ENCODE measurements at regions of chr11 and their contacts with region 1.

Region 1: DNA sequence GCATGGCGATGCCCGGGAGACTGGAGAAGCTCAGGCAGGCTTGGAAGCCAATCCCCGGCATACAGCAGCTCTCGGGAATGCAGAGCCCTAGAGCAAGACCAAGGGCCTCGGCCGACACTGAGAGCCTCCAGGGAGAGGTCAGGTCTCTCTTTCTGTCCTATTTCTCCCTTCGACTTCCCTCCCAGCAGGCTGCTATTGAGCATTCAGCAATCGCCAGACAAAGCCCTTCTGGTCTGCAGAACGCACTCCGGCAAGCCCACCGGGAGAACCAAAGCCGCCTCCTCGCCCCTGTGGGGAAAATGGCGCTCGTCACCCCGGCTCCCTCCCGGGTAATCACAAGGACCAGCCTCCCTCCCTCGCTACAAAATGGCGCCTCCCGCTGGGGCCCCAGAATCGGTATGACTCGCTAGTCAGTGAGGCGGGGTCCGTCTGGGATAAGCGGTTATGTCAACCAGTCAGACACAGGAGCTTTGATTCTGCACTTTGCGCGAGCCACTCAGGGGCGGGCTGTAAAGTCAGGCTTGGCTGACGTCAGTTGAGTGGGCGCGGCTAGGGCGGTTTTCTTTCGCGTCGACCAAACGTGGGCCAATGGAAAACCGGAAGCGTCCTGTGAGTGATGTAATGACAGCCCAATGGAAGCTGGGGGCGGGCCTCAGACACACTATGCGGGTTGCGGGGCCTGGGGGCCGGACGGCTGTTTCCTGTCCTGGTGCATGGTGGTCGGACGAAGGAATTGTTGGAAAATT is at the start of gene ZNF143:
- DNase-seq: peak; percentile 99 to 100 (median 100)
- H3K4me3 ChIP-seq: peak within 1 kb of the TSS; percentile 88 to 96
- H3K4me3 Mint-ChIP-seq: peak within 1 kb of the TSS; percentile 93 to 98 (median 97)
- H3K27ac ChIP-seq: peak within 1 kb of the TSS; percentile 97
- H3K27ac Mint-ChIP-seq: peak within 1 kb of the TSS; percentile 98 to 100 (median 99)
- H3K4me1 ChIP-seq: peaks cover 33% of the 10 kb centered on the region
- H3K4me1 Mint-ChIP-seq: peaks cover 16 to 43% (median 26%) of the 10 kb centered on the region in 4 donors
- H3K27me3 ChIP-seq: no peaks in the 10 kb centered on the region
- H3K27me3 Mint-ChIP-seq: no peaks in the 10 kb centered on the region
- total RNA-seq, gene ZNF143: 50.5 to 51.1 TPM

Region 2: GRCh38 chr11:8682303-8683114 is 778.0 kb before region 1 on chr11 and contains the starts of genes RPL27A and TRIM66:
- CTCF ChIA-PET with region 1: no interaction called
- POLR2A ChIA-PET with region 1: interaction called, 29 read pairs
- intact Hi-C with region 1: loop called (anchors 1 kb)
- DNase-seq: peak; percentile 98 to 99 (median 98)
- H3K4me3 ChIP-seq: peak within 1 kb of the TSS; percentile 61 to 87
- H3K4me3 Mint-ChIP-seq: peak within 1 kb of the TSS; percentile 89 to 99 (median 96)
- H3K27ac ChIP-seq: peak within 1 kb of the TSS; percentile 96
- H3K27ac Mint-ChIP-seq: peak within 1 kb of the TSS; percentile 97 to 99 (median 98)
- H3K4me1 ChIP-seq: peaks cover 34% of the 10 kb centered on the region
- H3K4me1 Mint-ChIP-seq: peaks cover 28 to 72% (median 40%) of the 10 kb centered on the region in 4 donors
- H3K27me3 ChIP-seq: no peaks in the 10 kb centered on the region
- H3K27me3 Mint-ChIP-seq: no peaks in the 10 kb centered on the region
- total RNA-seq, gene RPL27A: 1,456 to 1,504 TPM
- total RNA-seq, gene TRIM66: 25.0 to 31.3 TPM

Region 3: GRCh38 chr11:9265211-9266131 is 195.0 kb before region 1 on chr11 and contains the start of gene DENND5A:
- CTCF ChIA-PET with region 1: no interaction called
- POLR2A ChIA-PET with region 1: interaction called, 22 read pairs
- intact Hi-C with region 1: loop called (anchors 2 kb)
- DNase-seq: peak; percentile 32 to 51 (median 35)
- H3K4me3 ChIP-seq: peak within 1 kb of the TSS; percentile 68 to 76
- H3K4me3 Mint-ChIP-seq: peak within 1 kb of the TSS; percentile 90 to 99 (median 97)
- H3K27ac ChIP-seq: peak within 1 kb of the TSS; percentile 48
- H3K27ac Mint-ChIP-seq: peak within 1 kb of the TSS; percentile 92 to 97 (median 95)
- H3K4me1 ChIP-seq: peaks cover 33% of the 10 kb centered on the region
- H3K4me1 Mint-ChIP-seq: peaks cover 25 to 39% (median 31%) of the 10 kb centered on the region in 4 donors
- H3K27me3 ChIP-seq: no peaks in the 10 kb centered on the region
- H3K27me3 Mint-ChIP-seq: peaks cover 0 to 2% of the 10 kb centered on the region in 2 donors
- total RNA-seq, gene DENND5A: 58.6 to 61.9 TPM

Region 4: GRCh38 chr11:9363954-9364912 is 96.3 kb before region 1 on chr11:
- CTCF ChIA-PET with region 1: no interaction called
- POLR2A ChIA-PET with region 1: interaction called, 35 read pairs
- intact Hi-C with region 1: no loop called
- DNase-seq: peak; percentile 66 to 85 (median 78)
- H3K4me3 ChIP-seq: peak overlapping the region; percentile 62 to 96
- H3K4me3 Mint-ChIP-seq: peak overlapping the region; percentile 82 to 89 (median 88)
- H3K27ac ChIP-seq: peak overlapping the region; percentile 84
- H3K27ac Mint-ChIP-seq: peak overlapping the region; percentile 89 to 97 (median 92)
- H3K4me1 ChIP-seq: peaks cover 10% of the 10 kb centered on the region
- H3K4me1 Mint-ChIP-seq: peaks cover 11 to 13% (median 12%) of the 10 kb centered on the region in 4 donors
- H3K27me3 ChIP-seq: no peaks in the 10 kb centered on the region
- H3K27me3 Mint-ChIP-seq: no peaks in the 10 kb centered on the region

Region 5: DNA sequence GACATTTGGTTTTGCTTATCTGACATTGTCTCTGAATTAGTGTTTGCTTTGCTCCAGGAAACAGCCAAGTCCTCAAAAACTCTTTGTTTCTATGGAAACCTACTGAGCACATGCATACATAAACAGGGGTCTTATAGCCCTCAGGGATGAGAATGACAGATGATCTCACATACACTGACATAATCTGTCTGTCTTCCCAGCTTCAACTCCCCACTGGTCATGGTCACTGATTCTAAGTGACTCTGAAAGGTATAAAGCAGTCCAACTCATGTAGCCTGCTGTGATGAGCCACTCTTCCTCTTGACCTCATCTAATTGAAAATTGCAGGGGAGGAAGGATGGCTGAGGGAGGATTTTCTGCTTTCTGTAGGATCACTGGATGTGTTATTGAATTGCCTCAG is 12.9 kb after region 1 on chr11:
- CTCF ChIA-PET with region 1: no interaction called
- POLR2A ChIA-PET with region 1: interaction called, 18 read pairs
- intact Hi-C with region 1: no loop called
- DNase-seq: no peak
- H3K4me3 ChIP-seq: no peak overlapping the region
- H3K4me3 Mint-ChIP-seq: no peak overlapping the region
- H3K27ac ChIP-seq: no peak overlapping the region
- H3K27ac Mint-ChIP-seq: peak overlapping the region in 1 of 7 donors; percentile 13
- H3K4me1 ChIP-seq: no peaks in the 10 kb centered on the region
- H3K4me1 Mint-ChIP-seq: peaks cover under 1 to 11% (median 3%) of the 10 kb centered on the region in 4 donors
- H3K27me3 ChIP-seq: no peaks in the 10 kb centered on the region
- H3K27me3 Mint-ChIP-seq: no peaks in the 10 kb centered on the region

Region 6: GRCh38 chr11:9527481-9528140 is 67.1 kb after region 1 on chr11:
- CTCF ChIA-PET with region 1: no interaction called
- POLR2A ChIA-PET with region 1: no interaction called
- intact Hi-C with region 1: no loop called
- DNase-seq: no peak
- H3K4me3 ChIP-seq: no peak overlapping the region
- H3K4me3 Mint-ChIP-seq: no peak overlapping the region
- H3K27ac ChIP-seq: no peak overlapping the region
- H3K27ac Mint-ChIP-seq: peak overlapping the region in 1 of 7 donors; percentile 15
- H3K4me1 ChIP-seq: no peaks in the 10 kb centered on the region
- H3K4me1 Mint-ChIP-seq: peaks cover 0 to 4% (median 0%) of the 10 kb centered on the region in 4 donors
- H3K27me3 ChIP-seq: no peaks in the 10 kb centered on the region
- H3K27me3 Mint-ChIP-seq: no peaks in the 10 kb centered on the region

Region 7: GRCh38 chr11:9613118-9613829 is 152.8 kb after region 1 on chr11:
- CTCF ChIA-PET with region 1: interaction called, 3 read pairs
- POLR2A ChIA-PET with region 1: interaction called, 25 read pairs
- intact Hi-C with region 1: loop called (anchors 1 kb)
- DNase-seq: peak; percentile 78 to 85 (median 79)
- H3K4me3 ChIP-seq: peak overlapping the region; percentile 40 to 67
- H3K4me3 Mint-ChIP-seq: peak overlapping the region; percentile 91 to 100 (median 97)
- H3K27ac ChIP-seq: peak overlapping the region; percentile 88
- H3K27ac Mint-ChIP-seq: peak overlapping the region; percentile 94 to 100 (median 98)
- H3K4me1 ChIP-seq: peaks cover 16% of the 10 kb centered on the region
- H3K4me1 Mint-ChIP-seq: peaks cover 12 to 20% (median 14%) of the 10 kb centered on the region in 4 donors
- H3K27me3 ChIP-seq: no peaks in the 10 kb centered on the region
- H3K27me3 Mint-ChIP-seq: no peaks in the 10 kb centered on the region

Region 8: GRCh38 chr11:9651899-9652748 is 191.6 kb after region 1 on chr11:
- CTCF ChIA-PET with region 1: no interaction called
- POLR2A ChIA-PET with region 1: no interaction called
- intact Hi-C with region 1: no loop called
- DNase-seq: no peak
- H3K4me3 ChIP-seq: no peak overlapping the region
- H3K4me3 Mint-ChIP-seq: no peak overlapping the region
- H3K27ac ChIP-seq: no peak overlapping the region
- H3K27ac Mint-ChIP-seq: peak overlapping the region in 3 of 7 donors; percentile 25 to 53 (median 32)
- H3K4me1 ChIP-seq: no peaks in the 10 kb centered on the region
- H3K4me1 Mint-ChIP-seq: no peaks in the 10 kb centered on the region
- H3K27me3 ChIP-seq: no peaks in the 10 kb centered on the region
- H3K27me3 Mint-ChIP-seq: peaks cover 3% of the 10 kb centered on the region in 2 donors

Region 9: GRCh38 chr11:10857709-10858438 is 1397.4 kb after region 1 on chr11 and contains the start of gene ZBED5:
- CTCF ChIA-PET with region 1: no interaction called
- POLR2A ChIA-PET with region 1: interaction called, 5 read pairs
- intact Hi-C with region 1: loop called (anchors 2 kb)
- DNase-seq: peak; percentile 95 to 97 (median 97)
- H3K4me3 ChIP-seq: peak within 1 kb of the TSS; percentile 93 to 100
- H3K4me3 Mint-ChIP-seq: peak within 1 kb of the TSS; percentile 98 to 100 (median 99)
- H3K27ac ChIP-seq: peak within 1 kb of the TSS; percentile 93
- H3K27ac Mint-ChIP-seq: peak within 1 kb of the TSS; percentile 99 to 100 (median 99)
- H3K4me1 ChIP-seq: peaks cover 36% of the 10 kb centered on the region
- H3K4me1 Mint-ChIP-seq: peaks cover 26 to 63% (median 34%) of the 10 kb centered on the region in 4 donors
- H3K27me3 ChIP-seq: no peaks in the 10 kb centered on the region
- H3K27me3 Mint-ChIP-seq: no peaks in the 10 kb centered on the region
- total RNA-seq, gene ZBED5: 126 to 129 TPM